Ovary (tissue), 10 donors: ENCODE measurements at regions of chr17 and their contacts with region 1.

Region 1: GRCh38 chr17:4004517-4005295 is 40.5 kb upstream of the ATP2A3 start:
- DNase-seq: peak in 4 of 5 donors; percentile 49 to 73 (median 56)
- H3K4me3 ChIP-seq: no peak overlapping the region
- H3K27ac ChIP-seq: no peak overlapping the region
- H3K4me1 ChIP-seq: peaks cover 3% of the 10 kb centered on the region
- H3K27me3 ChIP-seq: no peaks in the 10 kb centered on the region
- CTCF ChIP-seq: peak; percentile 61 to 76 (median 69)
- EP300 ChIP-seq: no peak
- POLR2A ChIP-seq: no peak

Region 2: GRCh38 chr17:3859940-3860339 is 144.8 kb before region 1 on chr17:
- intact Hi-C with region 1: loop called in 3 of 4 experiments (anchors 2 to 10 kb)
- DNase-seq: no peak
- H3K4me3 ChIP-seq: no peak overlapping the region
- H3K27ac ChIP-seq: no peak overlapping the region
- H3K4me1 ChIP-seq: no peaks in the 10 kb centered on the region
- H3K27me3 ChIP-seq: no peaks in the 10 kb centered on the region
- CTCF ChIP-seq: no peak
- EP300 ChIP-seq: no peak
- POLR2A ChIP-seq: no peak

Region 3: DNA sequence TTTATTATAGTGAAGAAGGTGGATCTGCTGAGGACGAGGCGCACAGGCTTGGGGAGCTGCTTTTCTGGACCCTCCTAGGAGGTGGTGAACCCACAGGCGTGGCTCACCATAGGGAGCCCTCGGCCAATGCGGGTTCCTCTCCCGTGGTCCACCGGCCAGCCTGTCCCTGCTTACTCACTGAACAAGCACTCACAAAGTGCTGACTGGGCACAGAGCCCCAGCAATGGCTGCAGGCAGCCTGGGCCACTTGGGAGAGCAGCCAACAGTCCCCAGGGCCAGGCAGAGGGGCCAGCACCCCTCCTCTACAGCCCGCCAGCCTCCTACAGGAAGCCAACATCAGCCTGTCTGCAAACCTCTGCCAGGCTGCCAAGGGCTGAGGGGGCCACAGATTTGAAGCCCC is 139.5 kb before region 1 on chr17:
- intact Hi-C with region 1: loop called in 3 of 4 experiments (anchors 2 to 10 kb)
- DNase-seq: no peak
- H3K4me3 ChIP-seq: no peak overlapping the region
- H3K27ac ChIP-seq: no peak overlapping the region
- H3K4me1 ChIP-seq: no peaks in the 10 kb centered on the region
- H3K27me3 ChIP-seq: no peaks in the 10 kb centered on the region
- CTCF ChIP-seq: no peak
- EP300 ChIP-seq: no peak
- POLR2A ChIP-seq: no peak

Region 4: GRCh38 chr17:3913531-3914311 is 91.0 kb before region 1 on chr17:
- intact Hi-C with region 1: loop called (anchors 5 to 10 kb)
- DNase-seq: peak; percentile 70 to 87 (median 81)
- H3K4me3 ChIP-seq: no peak overlapping the region
- H3K27ac ChIP-seq: no peak overlapping the region
- H3K4me1 ChIP-seq: peaks cover 12% of the 10 kb centered on the region
- H3K27me3 ChIP-seq: no peaks in the 10 kb centered on the region
- CTCF ChIP-seq: peak; percentile 86 to 96 (median 92)
- EP300 ChIP-seq: no peak
- POLR2A ChIP-seq: no peak